T-cell (primary cell): ENCODE measurements at regions of chr1 and their contacts with region 1.

Region 1: DNA sequence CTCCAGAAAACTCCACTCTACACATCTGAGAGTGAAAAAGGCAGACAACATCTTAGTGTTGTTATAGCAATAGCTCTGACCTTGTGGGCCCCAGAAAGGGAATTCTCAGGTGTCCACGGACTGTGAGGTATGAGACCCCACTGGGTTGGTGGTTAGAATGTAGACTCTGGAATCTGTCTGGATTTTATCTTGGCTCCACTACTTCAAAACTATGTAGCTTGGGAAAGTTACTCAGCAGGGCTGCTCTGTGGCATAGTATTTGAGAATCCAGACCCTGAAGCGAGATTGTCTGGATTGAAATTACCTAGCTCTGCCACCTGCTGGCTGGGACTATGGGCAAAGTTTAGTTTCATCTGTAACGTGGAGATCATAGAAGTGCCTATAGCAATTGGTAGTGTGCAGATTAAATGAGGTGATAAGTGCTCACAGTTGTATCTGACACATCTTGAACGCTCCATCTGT is 25.8 kb downstream of the PRDM2 start:
- DNase-seq: peak; percentile 36 to 81 (median 63)
- ATAC-seq: peak; percentile 32 to 64 (median 52)
- H3K4me3 ChIP-seq: no peak overlapping the region
- H3K4me3 Mint-ChIP-seq: no peak overlapping the region
- H3K27ac ChIP-seq: no peak overlapping the region
- H3K27ac Mint-ChIP-seq: peak overlapping the region; percentile 21 to 70
- H3K4me1 ChIP-seq: peaks cover 12 to 24% of the 10 kb centered on the region in 2 experiments
- H3K4me1 Mint-ChIP-seq: peaks cover 66 to 73% (median 73%) of the 10 kb centered on the region in 3 donors
- H3K27me3 ChIP-seq: no peaks in the 10 kb centered on the region
- H3K27me3 Mint-ChIP-seq: no peaks in the 10 kb centered on the region

Region 2: DNA sequence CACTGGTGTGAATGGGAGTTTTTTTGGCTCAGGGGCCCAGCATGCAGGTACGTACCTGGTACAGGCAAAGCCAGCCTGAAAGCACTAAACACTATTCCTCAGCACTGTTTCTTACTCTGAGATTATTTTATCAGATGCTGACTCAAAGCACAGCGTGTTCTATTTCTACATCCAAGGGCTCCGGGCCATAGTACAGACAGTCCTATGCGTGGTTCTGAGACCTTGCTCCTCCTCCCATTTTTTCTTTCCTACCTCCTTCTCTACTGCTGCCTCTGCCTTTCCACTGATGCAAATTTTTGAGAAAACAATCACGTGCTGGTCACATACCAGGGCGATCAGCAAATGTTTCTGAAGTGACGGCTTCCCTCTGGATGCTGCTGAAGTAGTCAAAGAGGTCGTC is 105.8 kb before region 1 on chr1:
- CTCF ChIA-PET with region 1: no interaction called
- POLR2A ChIA-PET with region 1: no interaction called
- DNase-seq: no peak
- ATAC-seq: no peak
- H3K4me3 ChIP-seq: no peak overlapping the region
- H3K4me3 Mint-ChIP-seq: no peak overlapping the region
- H3K27ac ChIP-seq: no peak overlapping the region
- H3K27ac Mint-ChIP-seq: no peak overlapping the region
- H3K4me1 ChIP-seq: no peaks in the 10 kb centered on the region
- H3K4me1 Mint-ChIP-seq: no peaks in the 10 kb centered on the region
- H3K27me3 ChIP-seq: peaks cover 6 to 16% of the 10 kb centered on the region in 2 experiments
- H3K27me3 Mint-ChIP-seq: peaks cover 17 to 19% of the 10 kb centered on the region in 2 donors

Region 3: DNA sequence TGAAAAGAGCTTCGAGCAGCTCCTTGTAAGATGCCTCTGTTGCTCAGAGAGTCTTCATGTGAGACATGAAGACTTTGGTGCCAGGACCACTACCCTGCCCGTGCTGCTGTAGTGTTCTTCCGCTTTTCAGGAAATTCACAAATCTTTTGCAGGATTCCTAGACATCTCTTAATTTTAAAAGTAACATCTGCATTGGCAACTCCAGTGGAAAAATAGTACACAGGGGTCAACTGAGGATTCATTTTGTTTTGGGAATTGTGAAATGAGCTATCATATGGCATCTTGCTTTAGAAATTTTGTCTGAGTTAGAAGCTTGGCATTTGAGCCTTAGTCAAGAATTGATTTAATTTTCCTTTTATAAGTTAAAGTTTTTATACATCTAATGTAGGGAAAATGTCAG is 18.6 kb before region 1 on chr1:
- CTCF ChIA-PET with region 1: interaction called, 4 to 23 read pairs
- POLR2A ChIA-PET with region 1: interaction called, 5 to 27 read pairs
- DNase-seq: no peak
- ATAC-seq: no peak
- H3K4me3 ChIP-seq: no peak overlapping the region
- H3K4me3 Mint-ChIP-seq: no peak overlapping the region
- H3K27ac ChIP-seq: no peak overlapping the region
- H3K27ac Mint-ChIP-seq: no peak overlapping the region
- H3K4me1 ChIP-seq: peaks cover 13 to 25% of the 10 kb centered on the region in 2 experiments
- H3K4me1 Mint-ChIP-seq: peaks cover 76 to 82% (median 81%) of the 10 kb centered on the region in 3 donors
- H3K27me3 ChIP-seq: no peaks in the 10 kb centered on the region
- H3K27me3 Mint-ChIP-seq: no peaks in the 10 kb centered on the region

Region 4: GRCh38 chr1:13714851-13715250 is 10.9 kb before region 1 on chr1:
- CTCF ChIA-PET with region 1: interaction called, 4 to 22 read pairs
- POLR2A ChIA-PET with region 1: interaction called in 1 of 2 experiments, 9 read pairs
- DNase-seq: no peak
- ATAC-seq: no peak
- H3K4me3 ChIP-seq: no peak overlapping the region
- H3K4me3 Mint-ChIP-seq: no peak overlapping the region
- H3K27ac ChIP-seq: no peak overlapping the region
- H3K27ac Mint-ChIP-seq: peak overlapping the region in 1 of 2 donors; percentile 12
- H3K4me1 ChIP-seq: no peaks in the 10 kb centered on the region
- H3K4me1 Mint-ChIP-seq: peaks cover 46 to 52% (median 48%) of the 10 kb centered on the region in 3 donors
- H3K27me3 ChIP-seq: no peaks in the 10 kb centered on the region
- H3K27me3 Mint-ChIP-seq: no peaks in the 10 kb centered on the region